Activated naive CD4-positive, alpha-beta T cell treated with anti-CD3 and anti-CD28 coated beads, Interleukin-2, amount 10 ng/mL, durations not matched to agents 7 days and 5 days (primary cell): ENCODE measurements at regions of chr2 and their contacts with region 1.

Region 1: GRCh38 chr2:127591221-127591923 is 54.6 kb upstream of the GPR17 start:
- DNase-seq: peak; percentile 79
- H3K4me3 Mint-ChIP-seq: no peak overlapping the region
- H3K27ac Mint-ChIP-seq: no peak overlapping the region
- H3K4me1 Mint-ChIP-seq: peaks cover 4% of the 10 kb centered on the region
- H3K27me3 Mint-ChIP-seq: peaks cover 10% of the 10 kb centered on the region

Region 2: DNA sequence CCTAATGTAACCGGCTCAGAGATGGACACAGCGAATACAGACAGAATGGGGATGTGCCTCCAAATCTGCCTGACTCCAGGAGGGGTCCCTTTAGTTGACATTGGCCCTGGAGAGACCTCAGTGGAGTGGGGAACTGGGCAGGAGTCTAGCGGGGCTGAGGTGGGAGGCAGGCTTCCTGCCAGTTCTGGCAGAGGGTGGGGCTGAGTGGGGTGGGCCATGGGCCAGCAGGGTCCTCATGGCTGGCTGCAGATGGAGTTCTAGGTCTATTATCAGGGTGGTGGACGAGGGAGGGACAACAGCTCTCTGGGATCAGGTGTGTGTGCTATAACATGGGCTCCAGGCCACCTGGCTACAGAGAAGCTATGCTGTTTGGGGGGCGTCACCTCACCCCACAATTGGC is 152.0 kb before region 1 on chr2:
- CTCF ChIA-PET with region 1: no interaction called
- DNase-seq: no peak
- H3K4me3 Mint-ChIP-seq: no peak overlapping the region
- H3K27ac Mint-ChIP-seq: no peak overlapping the region
- H3K4me1 Mint-ChIP-seq: no peaks in the 10 kb centered on the region
- H3K27me3 Mint-ChIP-seq: peaks cover 5% of the 10 kb centered on the region

Region 3: GRCh38 chr2:127551221-127551930 is 40.0 kb before region 1 on chr2:
- CTCF ChIA-PET with region 1: no interaction called
- DNase-seq: no peak
- H3K4me3 Mint-ChIP-seq: no peak overlapping the region
- H3K27ac Mint-ChIP-seq: no peak overlapping the region
- H3K4me1 Mint-ChIP-seq: peaks cover 8% of the 10 kb centered on the region
- H3K27me3 Mint-ChIP-seq: peaks cover 88% of the 10 kb centered on the region

Region 4: DNA sequence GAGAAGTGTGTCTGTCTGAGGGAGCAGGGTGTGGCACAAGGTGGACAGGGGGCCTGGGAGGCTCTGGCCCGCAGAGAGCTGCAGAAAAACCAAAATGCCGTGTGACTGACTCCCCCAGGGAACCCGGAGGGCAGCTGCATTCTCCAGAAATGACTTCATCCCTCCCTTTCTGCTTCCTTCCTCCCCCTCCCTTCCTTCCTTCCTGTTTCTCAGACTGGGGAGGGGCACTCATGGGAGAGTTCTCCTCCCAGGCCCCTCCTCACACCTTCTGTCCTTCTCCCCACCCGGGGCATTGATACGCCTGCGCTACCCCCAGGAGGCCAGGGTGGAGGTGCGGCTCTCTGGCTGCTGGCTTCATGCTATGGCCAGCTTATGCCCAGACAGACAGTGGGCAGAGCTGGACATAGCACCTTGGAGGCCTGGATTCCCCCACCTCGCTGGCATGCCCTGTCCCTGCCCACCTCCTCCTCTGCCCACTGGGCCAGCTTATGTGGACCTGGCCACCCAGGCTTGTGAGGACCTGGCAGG is 46.4 kb after region 1 on chr2:
- CTCF ChIA-PET with region 1: interaction called, 49 read pairs
- DNase-seq: peak; percentile 35
- H3K4me3 Mint-ChIP-seq: peak overlapping the region; percentile 48
- H3K27ac Mint-ChIP-seq: peak overlapping the region; percentile 86
- H3K4me1 Mint-ChIP-seq: peaks cover 54% of the 10 kb centered on the region
- H3K27me3 Mint-ChIP-seq: no peaks in the 10 kb centered on the region

Region 5: GRCh38 chr2:127644066-127645025 is 53.0 kb after region 1 on chr2:
- CTCF ChIA-PET with region 1: interaction called, 145 read pairs
- DNase-seq: no peak
- H3K4me3 Mint-ChIP-seq: no peak overlapping the region
- H3K27ac Mint-ChIP-seq: peak overlapping the region; percentile 42
- H3K4me1 Mint-ChIP-seq: peaks cover 53% of the 10 kb centered on the region
- H3K27me3 Mint-ChIP-seq: peaks cover 4% of the 10 kb centered on the region

Region 6: DNA sequence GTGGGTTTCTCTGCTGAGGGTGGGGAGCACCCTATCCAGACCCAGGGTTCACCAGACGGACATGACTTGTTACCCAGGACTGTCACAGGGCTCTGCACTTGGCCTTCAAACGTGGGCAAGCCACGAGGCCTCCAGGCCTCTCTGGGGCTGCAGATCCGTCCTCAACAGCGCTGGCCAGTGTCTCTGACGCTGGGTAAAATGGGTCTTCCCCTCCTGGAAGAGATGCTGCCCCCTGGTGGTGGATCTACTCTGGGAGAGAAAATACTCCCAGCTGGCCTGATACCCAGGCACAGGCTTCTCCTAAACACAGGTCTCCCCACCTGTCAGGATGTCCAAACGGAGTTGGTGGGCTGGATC is 58.3 kb after region 1 on chr2:
- CTCF ChIA-PET with region 1: interaction called, 145 read pairs
- DNase-seq: peak; percentile 88
- H3K4me3 Mint-ChIP-seq: no peak overlapping the region
- H3K27ac Mint-ChIP-seq: peak overlapping the region; percentile 5
- H3K4me1 Mint-ChIP-seq: peaks cover 29% of the 10 kb centered on the region
- H3K27me3 Mint-ChIP-seq: peaks cover 31% of the 10 kb centered on the region

Region 7: GRCh38 chr2:127695491-127696472 is 104.4 kb after region 1 on chr2:
- CTCF ChIA-PET with region 1: interaction called, 10 read pairs
- DNase-seq: peak; percentile 73
- H3K4me3 Mint-ChIP-seq: no peak overlapping the region
- H3K27ac Mint-ChIP-seq: no peak overlapping the region
- H3K4me1 Mint-ChIP-seq: peaks cover 7% of the 10 kb centered on the region
- H3K27me3 Mint-ChIP-seq: peaks cover 12% of the 10 kb centered on the region